ENCODE measurements at regions of chr13 and their contacts with region 1.

Region 1: GRCh38 chr13:29508130-29508875 is 87.2 kb downstream of the SLC7A1 start:
- DNase-seq: peak; percentile 81 to 90 (median 84)
- ATAC-seq: peak; percentile 79 to 87 (median 86)
- H3K4me3 ChIP-seq: peak overlapping the region in 2 of 12 donors; percentile 8 to 19
- H3K27ac ChIP-seq: peak overlapping the region in 6 of 12 donors; percentile 10 to 68 (median 27)
- H3K4me1 ChIP-seq: peaks cover 0 to 24% (median 15%) of the 10 kb centered on the region in 12 donors
- H3K27me3 ChIP-seq: peaks cover 0 to 12% (median 0%) of the 10 kb centered on the region in 9 donors
- CTCF ChIP-seq: peak; percentile 94 to 99 (median 98)
- POLR2A ChIP-seq: no peak

Region 2: GRCh38 chr13:29561918-29562317 is 53.6 kb after region 1 on chr13:
- intact Hi-C with region 1: no loop called
- DNase-seq: no peak
- ATAC-seq: no peak
- H3K4me3 ChIP-seq: no peak overlapping the region
- H3K27ac ChIP-seq: no peak overlapping the region
- H3K4me1 ChIP-seq: peaks cover 0 to 9% (median 0%) of the 10 kb centered on the region in 12 donors
- H3K27me3 ChIP-seq: no peaks in the 10 kb centered on the region
- CTCF ChIP-seq: no peak
- POLR2A ChIP-seq: no peak

Region 3: DNA sequence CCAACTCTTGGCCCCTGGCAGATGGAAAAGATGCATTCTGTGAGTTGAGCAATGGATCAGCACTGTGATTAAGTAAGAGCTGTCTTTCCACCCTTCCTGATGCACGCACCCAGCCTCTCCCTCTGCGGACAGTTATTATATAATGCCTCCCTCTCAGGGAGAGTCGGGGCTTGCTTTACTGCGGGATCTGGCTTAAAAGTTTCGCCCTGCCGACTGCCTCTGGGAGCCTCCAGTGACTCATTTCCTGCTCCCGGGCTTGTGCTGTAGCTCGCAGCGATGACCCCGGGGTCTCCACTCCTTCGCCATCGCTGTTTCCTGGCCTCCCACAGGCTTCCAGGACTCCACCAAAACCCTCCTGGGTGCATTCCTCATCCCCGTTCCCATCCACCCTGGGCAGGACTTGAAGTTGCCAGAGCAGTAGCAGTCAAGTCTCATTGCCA is 194.6 kb after region 1 on chr13:
- intact Hi-C with region 1: loop called (anchors 1 to 2 kb)
- DNase-seq: peak; percentile 37 to 66 (median 47)
- ATAC-seq: peak in 3 of 4 donors; percentile 44 to 73 (median 56)
- H3K4me3 ChIP-seq: peak overlapping the region in 2 of 12 donors; percentile 27 to 31
- H3K27ac ChIP-seq: no peak overlapping the region
- H3K4me1 ChIP-seq: peaks cover 0 to 23% (median 11%) of the 10 kb centered on the region in 12 donors
- H3K27me3 ChIP-seq: no peaks in the 10 kb centered on the region
- CTCF ChIP-seq: no peak
- POLR2A ChIP-seq: no peak

Region 4: DNA sequence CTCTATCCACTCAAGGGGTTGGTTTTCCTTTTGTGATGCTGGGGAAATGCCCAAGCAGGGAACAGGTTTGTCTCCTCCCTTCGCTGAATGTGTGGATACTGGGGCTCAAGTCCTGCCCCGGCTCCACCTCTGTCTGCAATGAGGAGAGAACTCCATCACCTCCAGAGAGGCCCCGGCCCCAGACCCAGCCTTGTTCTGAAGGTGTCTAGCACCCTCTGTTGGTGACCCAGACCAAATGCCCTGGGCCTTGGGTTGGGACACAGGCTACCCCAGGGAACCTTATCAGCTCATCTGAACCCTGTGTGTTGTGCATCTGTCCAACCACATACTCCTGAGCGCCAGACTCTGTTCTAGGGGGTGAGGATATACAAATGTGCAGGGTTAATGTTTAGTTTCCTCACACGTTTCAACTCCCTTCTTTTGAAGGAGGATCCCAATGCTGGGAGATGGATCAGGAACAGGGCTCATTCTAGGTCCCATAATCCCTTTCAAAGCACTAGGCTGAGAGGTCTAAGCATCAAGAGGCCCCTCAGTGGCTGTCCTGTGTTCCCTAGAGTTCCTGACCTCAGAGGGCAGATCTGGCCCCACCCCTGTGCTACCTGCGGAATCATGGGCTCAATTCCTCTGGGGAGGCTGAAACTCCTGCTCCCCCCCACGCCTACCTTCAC is 199.7 kb after region 1 on chr13:
- intact Hi-C with region 1: loop called (anchors 1 to 2 kb)
- DNase-seq: peak in 3 of 5 donors; percentile 19 to 62 (median 33)
- ATAC-seq: peak; percentile 67 to 73 (median 71)
- H3K4me3 ChIP-seq: no peak overlapping the region
- H3K27ac ChIP-seq: no peak overlapping the region
- H3K4me1 ChIP-seq: peaks cover 0 to 15% (median 9%) of the 10 kb centered on the region in 12 donors
- H3K27me3 ChIP-seq: peaks cover 0 to 3% (median 0%) of the 10 kb centered on the region in 9 donors
- CTCF ChIP-seq: peak; percentile 21 to 64 (median 50)
- POLR2A ChIP-seq: no peak

Region 5: DNA sequence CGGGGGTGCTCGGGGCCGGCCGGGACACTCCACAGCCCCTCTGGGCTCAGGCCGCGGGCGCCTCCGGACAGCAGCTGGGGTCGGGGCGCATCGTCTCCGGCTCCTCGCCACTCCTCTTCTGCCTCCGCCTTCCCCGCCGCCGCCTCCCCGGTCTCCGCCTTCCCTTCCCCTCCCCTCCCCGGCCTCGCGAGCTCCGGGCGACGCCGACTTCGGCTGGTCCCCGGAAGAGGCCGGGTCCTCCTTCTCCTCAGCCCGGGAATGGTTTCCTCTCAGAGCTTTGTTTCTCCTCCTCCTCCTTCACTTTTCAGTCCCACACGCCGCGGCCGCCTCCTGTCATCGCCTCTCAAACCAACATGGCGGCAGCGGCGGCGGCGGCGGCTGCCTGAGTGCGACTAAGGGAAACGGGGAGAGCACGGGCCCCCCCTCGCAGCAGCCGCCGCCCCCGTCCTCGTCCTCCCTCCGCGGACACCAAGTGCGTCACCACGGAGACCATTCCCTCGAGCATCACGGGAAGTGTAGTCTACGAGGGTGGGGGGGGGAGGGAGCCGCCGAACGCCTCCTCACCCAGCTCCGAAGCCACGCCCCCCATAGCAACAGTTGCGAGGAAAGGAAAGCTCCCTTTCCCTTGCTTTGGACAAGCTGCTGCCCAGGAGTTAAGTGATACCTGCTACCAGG is 342.1 kb after region 1 on chr13 and contains the start of gene UBL3:
- intact Hi-C with region 1: loop called in 2 of 10 experiments (anchors 2 to 10 kb)
- DNase-seq: peak; percentile 97
- ATAC-seq: peak; percentile 96 to 98 (median 98)
- H3K4me3 ChIP-seq: peak within 1 kb of the TSS; percentile 64 to 96 (median 89)
- H3K27ac ChIP-seq: peak within 1 kb of the TSS; percentile 96 to 99 (median 98)
- H3K4me1 ChIP-seq: peaks cover 0 to 29% (median 19%) of the 10 kb centered on the region in 12 donors
- H3K27me3 ChIP-seq: no peaks in the 10 kb centered on the region
- CTCF ChIP-seq: no peak
- POLR2A ChIP-seq: peak in 1 of 2 donors; percentile 77
- total RNA-seq, gene UBL3: 19.0 to 27.7 (median 21.2) TPM

Region 6: DNA sequence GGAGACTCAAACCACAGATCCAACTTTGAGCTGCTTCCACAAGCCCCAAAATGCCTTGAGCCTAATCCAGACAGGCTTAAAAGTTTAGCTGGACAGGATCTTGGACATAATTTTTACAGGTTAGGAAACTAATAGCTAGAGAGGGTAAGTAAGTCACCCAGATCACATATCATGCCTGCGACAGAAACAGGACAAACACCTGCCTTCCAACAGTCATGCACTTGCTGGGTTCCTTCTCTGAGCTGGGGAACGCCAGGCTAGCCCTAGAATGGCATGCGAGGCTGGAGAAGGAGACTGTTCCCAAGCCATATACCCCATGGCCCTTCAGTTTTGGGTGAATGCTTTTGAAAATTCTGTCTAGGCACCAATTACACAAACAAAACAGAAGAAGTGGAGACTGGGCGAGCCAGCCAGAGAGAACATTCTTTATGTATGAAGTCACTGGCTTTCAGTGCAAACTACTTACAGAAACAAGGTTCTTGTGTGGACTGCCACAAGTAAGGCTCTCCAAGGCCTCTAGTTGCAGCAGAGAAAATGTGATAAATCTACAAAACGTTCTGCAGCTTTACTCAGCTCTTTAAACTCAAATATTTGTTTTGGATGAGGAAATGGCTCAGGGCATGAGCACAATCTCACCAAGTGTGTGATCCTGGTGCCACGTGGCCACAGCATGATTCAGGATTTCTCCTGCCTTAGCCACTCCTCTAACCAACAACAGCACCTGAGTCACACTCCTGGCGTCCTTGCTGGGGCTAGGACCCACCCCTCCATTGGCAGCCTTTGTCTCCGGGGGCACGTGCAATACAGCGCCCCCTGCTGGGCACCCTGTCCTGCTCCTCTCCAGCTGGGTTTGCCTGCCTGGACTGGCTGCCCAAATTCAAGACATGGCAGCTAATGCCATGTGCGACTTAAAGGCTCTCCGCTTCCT is 415.5 kb after region 1 on chr13:
- intact Hi-C with region 1: loop called in 2 of 10 experiments (anchors 5 to 10 kb)
- DNase-seq: peak; percentile 40 to 79 (median 71)
- ATAC-seq: peak; percentile 72 to 84 (median 80)
- H3K4me3 ChIP-seq: no peak overlapping the region
- H3K27ac ChIP-seq: peak overlapping the region in 11 of 12 donors; percentile 28 to 81 (median 56)
- H3K4me1 ChIP-seq: peaks cover 0 to 35% (median 26%) of the 10 kb centered on the region in 12 donors
- H3K27me3 ChIP-seq: no peaks in the 10 kb centered on the region
- CTCF ChIP-seq: peak; percentile 62 to 84 (median 68)
- POLR2A ChIP-seq: no peak